Left colon (tissue), 2 donors: ENCODE measurements at regions of chr9 and their contacts with region 1.

Region 1: GRCh38 chr9:124716808-124717207 is 54.3 kb downstream of the NR6A1 start:
- DNase-seq: no peak
- ATAC-seq: peak; percentile 7

Region 2: DNA sequence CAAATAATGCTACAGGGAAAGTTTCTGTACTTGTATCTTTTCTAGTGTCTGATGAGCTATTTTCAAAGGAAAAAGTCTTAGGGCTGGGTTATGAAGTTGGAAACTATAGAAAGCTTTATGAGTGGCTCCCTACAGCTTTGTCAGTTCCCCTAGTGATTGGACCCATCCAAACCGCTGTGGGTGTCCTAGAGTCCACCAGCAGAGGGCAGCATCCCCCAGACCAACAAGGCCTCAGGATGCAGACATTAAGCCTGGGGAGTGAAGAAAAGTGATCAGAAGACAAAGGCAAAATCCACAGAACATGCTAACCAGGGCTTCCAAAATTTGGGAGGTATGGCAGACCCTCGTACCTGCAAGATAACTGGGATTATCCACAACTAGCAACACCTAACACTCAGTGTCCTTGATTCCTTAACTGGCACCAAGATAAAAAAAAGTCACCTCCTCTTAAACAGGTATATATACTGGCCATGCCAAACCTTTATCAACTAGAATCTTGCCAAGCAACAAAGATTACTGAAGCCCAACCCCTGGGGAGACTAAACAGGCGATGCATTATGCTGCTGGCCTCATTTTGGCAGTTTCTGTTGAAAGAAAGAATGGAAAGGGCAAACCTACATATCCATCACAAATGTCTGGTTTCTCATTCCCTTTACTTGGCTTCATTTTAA is 99.2 kb before region 1 on chr9:
- intact Hi-C with region 1: loop called in 1 of 2 experiments (anchors 10 kb)
- DNase-seq: peak; percentile 58 to 86
- ATAC-seq: peak; percentile 81

Region 3: DNA sequence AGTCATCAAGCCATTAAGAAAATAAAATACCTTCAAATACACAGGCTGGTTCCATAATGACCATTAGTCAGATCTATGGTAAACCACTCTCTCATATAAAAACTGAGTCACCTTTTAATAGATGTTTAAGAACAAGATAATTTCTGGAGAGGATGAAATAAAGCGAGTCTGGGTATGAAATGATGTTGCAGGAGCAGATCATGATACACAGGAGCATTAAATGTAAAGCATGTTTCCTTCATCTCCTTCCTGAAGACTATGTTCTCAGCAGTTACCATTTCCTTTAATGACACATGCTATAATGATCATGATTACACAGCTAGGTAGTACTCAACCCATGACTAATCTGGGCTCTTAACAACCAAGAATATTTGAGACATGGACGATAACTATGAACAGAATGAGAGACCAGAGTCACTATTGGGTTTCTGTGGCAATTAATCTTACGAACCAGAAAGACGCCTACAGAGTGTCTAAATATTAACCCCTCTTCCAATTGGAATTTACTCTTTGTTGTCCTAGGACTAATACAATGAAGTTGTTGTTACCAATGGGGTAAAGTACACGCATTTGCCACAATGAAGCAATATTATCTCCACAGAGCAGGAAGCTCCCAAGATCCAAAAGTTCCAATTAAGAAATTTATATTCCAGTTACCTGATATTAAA is 51.3 kb before region 1 on chr9:
- intact Hi-C with region 1: no loop called
- DNase-seq: no peak
- ATAC-seq: peak; percentile 80

Region 4: GRCh38 chr9:124820698-124821623 is 104.2 kb after region 1 on chr9:
- intact Hi-C with region 1: no loop called
- DNase-seq: no peak
- ATAC-seq: no peak